ENCODE measurements at regions of chr4 and their contacts with region 1.

Region 1: GRCh38 chr4:88523325-88524129 is at the start of gene PYURF:
- DNase-seq: peak; percentile 89
- H3K4me3 Mint-ChIP-seq: peak within 1 kb of the TSS; percentile 90
- H3K27ac Mint-ChIP-seq: peak within 1 kb of the TSS; percentile 88
- H3K4me1 Mint-ChIP-seq: peaks cover 47% of the 10 kb centered on the region
- H3K27me3 Mint-ChIP-seq: no peaks in the 10 kb centered on the region
- total RNA-seq, gene PYURF: 49.0 to 51.7 TPM

Region 2: DNA sequence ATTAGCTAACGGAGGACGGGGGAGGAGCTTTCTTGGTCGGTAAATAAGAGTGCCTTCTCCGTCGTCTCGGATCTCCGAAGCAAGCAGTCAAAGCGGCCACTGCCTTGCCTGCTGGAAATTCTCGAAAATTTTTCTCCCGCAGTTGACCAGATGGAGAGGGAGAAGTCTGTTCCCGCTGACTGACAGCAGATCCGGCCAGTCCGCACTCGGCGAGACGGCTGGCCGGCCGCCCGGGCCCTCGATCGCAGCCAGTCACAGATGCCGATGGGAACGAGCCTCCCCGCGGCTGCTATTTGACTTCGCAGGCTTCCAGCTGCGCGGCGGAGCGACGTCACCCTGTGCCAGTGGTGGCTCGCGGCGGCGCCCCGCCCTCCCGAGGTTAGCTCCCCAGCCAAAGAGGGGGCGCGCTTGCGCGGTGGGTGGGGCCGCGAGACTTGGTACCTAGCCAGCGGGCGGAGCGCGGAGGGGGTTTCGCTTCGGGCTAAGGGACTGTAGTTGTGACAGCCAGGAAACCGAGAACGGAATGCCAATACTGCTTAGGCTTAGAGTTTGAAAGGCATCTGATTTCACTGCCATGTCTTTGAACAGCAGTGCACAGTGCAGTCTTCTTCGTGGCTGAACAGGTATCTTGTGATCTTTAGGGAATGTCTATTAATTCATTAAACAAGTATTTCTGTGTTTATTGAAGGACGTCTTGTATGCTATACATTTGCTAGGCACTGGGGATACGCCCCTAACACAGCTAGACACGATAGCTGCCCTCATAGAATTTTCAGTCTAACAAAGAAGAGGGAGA is 238.9 kb before region 1 on chr4 and contains the start of gene PPM1K:
- CTCF ChIA-PET with region 1: interaction called, 3 read pairs
- POLR2A ChIA-PET with region 1: no interaction called
- intact Hi-C with region 1: loop called (anchors 1 kb)
- DNase-seq: peak; percentile 100
- H3K4me3 Mint-ChIP-seq: peak within 1 kb of the TSS; percentile 99
- H3K27ac Mint-ChIP-seq: peak within 1 kb of the TSS; percentile 99
- H3K4me1 Mint-ChIP-seq: peaks cover 36% of the 10 kb centered on the region
- H3K27me3 Mint-ChIP-seq: no peaks in the 10 kb centered on the region
- total RNA-seq, gene PPM1K: 63.7 to 65.5 TPM

Region 3: DNA sequence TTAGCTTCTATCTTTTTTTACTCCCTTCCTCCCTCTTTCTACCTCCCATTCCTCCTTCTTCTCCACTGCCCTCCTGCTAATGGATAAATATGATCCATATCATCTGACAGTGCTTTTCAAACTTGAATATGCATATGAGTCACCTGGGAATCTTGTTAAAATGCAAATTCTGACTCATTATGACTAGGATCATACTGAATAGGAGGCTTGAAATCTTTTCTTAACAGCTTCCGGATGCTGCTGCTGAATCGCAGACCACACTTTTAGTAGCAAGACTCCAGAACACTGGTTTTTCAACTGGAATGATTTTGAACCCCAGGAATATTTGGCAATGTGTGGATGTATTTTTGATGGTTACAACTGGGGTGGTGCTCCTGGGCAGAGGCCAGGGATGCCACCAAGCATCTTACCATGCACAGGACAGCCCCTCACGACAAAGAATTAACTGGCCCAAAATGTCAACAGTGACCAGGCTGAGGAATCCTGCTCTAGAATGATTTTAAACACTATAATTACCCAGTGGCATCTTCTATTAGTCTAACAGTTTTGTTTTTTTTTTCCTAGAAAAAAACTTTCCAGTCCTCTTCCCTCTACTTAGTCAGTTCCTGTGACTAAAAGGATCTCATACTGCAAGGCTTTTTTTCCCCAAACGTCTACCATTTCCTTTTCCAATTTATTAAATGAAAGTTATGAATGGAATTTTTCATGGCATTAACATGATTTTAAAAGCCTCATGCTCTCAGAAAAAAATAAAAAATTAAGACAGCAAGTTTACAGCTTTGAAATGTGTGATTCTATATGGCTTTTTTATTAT is 10.6 kb after region 1 on chr4:
- CTCF ChIA-PET with region 1: interaction called, 13 read pairs
- POLR2A ChIA-PET with region 1: no interaction called
- intact Hi-C with region 1: loop called (anchors 1 kb)
- DNase-seq: no peak
- H3K4me3 Mint-ChIP-seq: no peak overlapping the region
- H3K27ac Mint-ChIP-seq: no peak overlapping the region
- H3K4me1 Mint-ChIP-seq: peaks cover 26% of the 10 kb centered on the region
- H3K27me3 Mint-ChIP-seq: no peaks in the 10 kb centered on the region

Region 4: GRCh38 chr4:88659055-88659889 is 135.7 kb after region 1 on chr4:
- CTCF ChIA-PET with region 1: interaction called, 17 read pairs
- POLR2A ChIA-PET with region 1: no interaction called
- intact Hi-C with region 1: loop called (anchors 2 kb)
- DNase-seq: peak; percentile 51
- H3K4me3 Mint-ChIP-seq: no peak overlapping the region
- H3K27ac Mint-ChIP-seq: no peak overlapping the region
- H3K4me1 Mint-ChIP-seq: peaks cover 2% of the 10 kb centered on the region
- H3K27me3 Mint-ChIP-seq: no peaks in the 10 kb centered on the region

Region 5: GRCh38 chr4:88792268-88792781 is 268.8 kb after region 1 on chr4:
- CTCF ChIA-PET with region 1: interaction called, 7 read pairs
- POLR2A ChIA-PET with region 1: no interaction called
- intact Hi-C with region 1: loop called (anchors 2 kb)
- DNase-seq: no peak
- H3K4me3 Mint-ChIP-seq: no peak overlapping the region
- H3K27ac Mint-ChIP-seq: no peak overlapping the region
- H3K4me1 Mint-ChIP-seq: peaks cover 19% of the 10 kb centered on the region
- H3K27me3 Mint-ChIP-seq: peaks cover under 1% of the 10 kb centered on the region

Region 6: GRCh38 chr4:89024051-89024675 is 500.6 kb after region 1 on chr4:
- CTCF ChIA-PET with region 1: interaction called, 15 read pairs
- POLR2A ChIA-PET with region 1: no interaction called
- intact Hi-C with region 1: loop called (anchors 1 kb)
- DNase-seq: peak; percentile 33
- H3K4me3 Mint-ChIP-seq: no peak overlapping the region
- H3K27ac Mint-ChIP-seq: no peak overlapping the region
- H3K4me1 Mint-ChIP-seq: peaks cover 5% of the 10 kb centered on the region
- H3K27me3 Mint-ChIP-seq: no peaks in the 10 kb centered on the region

Measured in activated CD4-positive, alpha-beta memory T cell treated with anti-CD3 and anti-CD28 coated beads for 36 hours (primary cell).